H1 (cell line): ENCODE measurements at regions of chr9 and their contacts with region 1.

Region 1: DNA sequence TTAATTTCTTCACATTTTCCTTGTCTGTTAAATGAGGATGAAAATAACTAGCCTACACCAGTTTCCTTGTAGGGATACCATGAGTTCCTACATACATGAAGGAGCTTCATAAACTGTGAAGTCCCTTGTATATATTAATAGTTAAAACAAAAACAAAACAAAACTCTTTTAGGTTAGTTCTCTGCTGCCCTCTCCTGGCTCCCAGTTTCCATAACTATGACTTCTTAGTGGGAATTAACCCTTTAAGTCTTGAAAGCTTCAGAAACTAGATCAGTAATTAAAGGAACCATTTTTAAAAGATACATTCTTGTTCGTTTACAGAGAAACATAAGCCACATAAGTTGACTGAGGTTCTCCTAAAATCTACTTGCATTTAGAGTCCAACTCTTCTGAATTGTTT is 500.0 kb upstream of the C9orf72 start:
- DNase-seq: peak; percentile 9 to 47
- H3K4me3 ChIP-seq: no peak overlapping the region
- H3K27ac ChIP-seq: no peak overlapping the region
- H3K4me1 ChIP-seq: peaks cover 0 to 4% (median 0%) of the 10 kb centered on the region in 4 experiments; a peak in 1 of 7 replicates
- H3K27me3 ChIP-seq: no peaks in the 10 kb centered on the region
- CTCF ChIP-seq: peak in 2 of 3 experiments; percentile 40 to 56; a peak in 2 of 4 replicates
- EP300 ChIP-seq: no peak
- POLR2A ChIP-seq: no peak
- RAD21 ChIP-seq: peak; percentile 81 to 82

Region 2: GRCh38 chr9:27714388-27714787 is 358.9 kb before region 1 on chr9:
- CTCF ChIA-PET with region 1: interaction called, 19 read pairs
- POLR2A ChIA-PET with region 1: no interaction called
- DNase-seq: no peak
- H3K4me3 ChIP-seq: no peak overlapping the region
- H3K27ac ChIP-seq: no peak overlapping the region
- H3K4me1 ChIP-seq: no peaks in the 10 kb centered on the region
- H3K27me3 ChIP-seq: no peaks in the 10 kb centered on the region
- CTCF ChIP-seq: peak; percentile 14 to 55 (median 34); a peak in 3 of 4 replicates
- EP300 ChIP-seq: no peak
- POLR2A ChIP-seq: no peak
- RAD21 ChIP-seq: peak; percentile 48 to 58

Region 3: GRCh38 chr9:27747450-27747849 is 325.8 kb before region 1 on chr9:
- CTCF ChIA-PET with region 1: interaction called, 12 read pairs
- POLR2A ChIA-PET with region 1: no interaction called
- DNase-seq: no peak
- H3K4me3 ChIP-seq: no peak overlapping the region
- H3K27ac ChIP-seq: no peak overlapping the region
- H3K4me1 ChIP-seq: peaks cover 7 to 23% (median 14%) of the 10 kb centered on the region in 4 experiments
- H3K27me3 ChIP-seq: no peaks in the 10 kb centered on the region
- CTCF ChIP-seq: no peak
- EP300 ChIP-seq: no peak
- POLR2A ChIP-seq: no peak
- RAD21 ChIP-seq: no peak